Head of caudate nucleus (tissue), 42 donors: ENCODE measurements at regions of chr2 and their contacts with region 1.

Region 1: DNA sequence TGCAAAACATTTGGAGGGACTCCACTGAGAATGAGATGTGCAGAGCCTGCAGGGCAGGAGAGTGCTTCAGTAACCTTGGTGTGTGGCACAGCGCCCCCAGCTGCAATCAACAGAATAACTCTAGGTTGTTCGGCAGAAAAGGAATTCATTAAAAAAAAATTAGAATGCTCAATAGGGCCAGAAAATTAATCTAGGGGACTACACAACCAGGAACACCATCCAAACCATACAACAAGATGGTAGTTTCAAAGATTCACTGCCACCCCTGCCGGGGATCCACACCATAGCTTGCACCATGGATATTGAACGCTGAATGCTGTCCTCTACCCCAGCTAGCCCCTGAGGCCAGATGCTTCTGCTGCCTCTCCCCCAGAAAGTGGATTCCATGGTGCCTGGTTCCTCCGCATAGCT is 50.1 kb downstream of the THUMPD2 start:
- DNase-seq: peak in 38 of 42 donors; percentile 27 to 77 (median 57)

Region 2: DNA sequence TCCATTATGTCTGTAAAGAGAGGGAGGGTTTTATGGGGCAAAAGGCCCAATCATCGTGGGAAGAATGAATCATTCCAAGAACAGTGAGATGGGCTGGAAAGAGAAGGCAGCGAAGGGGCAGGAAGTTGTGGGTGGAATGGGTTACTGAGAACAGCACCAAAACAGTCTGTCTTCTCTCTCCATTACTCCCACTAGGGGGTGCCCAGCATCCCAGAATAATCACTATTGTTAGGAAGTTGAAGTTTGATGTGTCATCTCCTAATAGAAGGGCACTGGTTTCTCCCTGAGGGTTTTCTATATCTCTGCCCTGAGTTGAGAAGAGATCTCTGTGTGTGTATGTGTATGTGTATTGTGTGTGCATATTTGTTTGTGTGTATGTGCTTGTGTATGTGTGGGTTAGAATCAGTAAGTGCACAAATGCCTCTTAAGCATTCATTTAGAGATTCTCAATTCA is 215.3 kb before region 1 on chr2:
- intact Hi-C with region 1: loop called (anchors 10 kb)
- DNase-seq: peak in 41 of 42 donors; percentile 25 to 90 (median 69)